Left ventricle myocardium superior (tissue), 1 donor: ENCODE measurements at regions of chrX and their contacts with region 1.

Region 1: DNA sequence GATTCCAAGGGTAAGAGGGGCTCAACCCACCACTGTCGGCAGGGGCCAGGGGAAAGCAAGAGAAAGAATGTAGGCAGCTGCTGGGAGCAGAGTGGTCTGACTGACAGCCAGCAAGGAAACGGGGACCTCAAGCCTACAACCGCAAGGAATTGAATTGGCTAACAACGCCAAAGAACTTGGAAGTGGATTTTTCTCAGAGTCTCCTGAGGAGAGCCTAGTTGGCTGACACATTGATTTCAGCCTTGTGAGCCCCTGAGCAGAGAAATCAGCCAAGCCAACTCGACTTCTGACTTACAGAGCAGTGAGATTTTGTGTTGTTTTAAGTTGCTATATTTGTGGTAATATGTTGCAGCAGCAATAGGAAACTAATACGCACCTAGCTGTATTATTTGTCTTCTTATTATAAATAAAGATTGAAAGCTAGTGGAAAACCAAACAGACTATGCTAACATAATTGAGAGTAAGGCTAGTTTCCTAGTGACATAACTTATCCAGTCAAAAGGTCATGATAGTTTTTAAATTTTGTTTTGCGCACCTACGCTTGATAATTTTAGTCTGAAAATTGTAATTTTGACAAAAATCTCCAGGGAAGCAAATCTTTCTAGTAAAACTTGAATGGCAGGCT is 145.8 kb upstream of the HCCS start:
- DNase-seq: no peak
- ATAC-seq: no peak

Region 2: DNA sequence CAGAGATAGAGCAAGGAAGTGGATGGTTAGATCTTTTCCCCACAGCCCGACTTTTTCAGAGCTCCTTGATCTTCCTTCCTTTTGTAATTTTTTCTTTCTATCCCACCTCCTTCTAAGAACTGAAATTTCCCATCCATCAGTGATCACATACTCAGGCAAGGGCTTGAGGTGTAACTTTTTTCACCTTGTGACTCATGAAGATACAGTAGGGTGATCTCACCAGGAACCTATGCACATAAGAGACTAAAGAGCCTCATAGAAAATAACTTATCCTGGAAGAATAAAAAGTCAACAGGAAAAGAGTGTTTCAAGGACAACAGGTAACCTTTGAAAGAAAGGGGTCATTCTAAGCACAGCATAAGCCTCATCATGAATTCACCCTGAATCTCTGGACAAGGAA is 14.7 kb after region 1 on chrX:
- intact Hi-C with region 1: loop called (anchors 2 kb)
- DNase-seq: no peak
- ATAC-seq: no peak

Region 3: DNA sequence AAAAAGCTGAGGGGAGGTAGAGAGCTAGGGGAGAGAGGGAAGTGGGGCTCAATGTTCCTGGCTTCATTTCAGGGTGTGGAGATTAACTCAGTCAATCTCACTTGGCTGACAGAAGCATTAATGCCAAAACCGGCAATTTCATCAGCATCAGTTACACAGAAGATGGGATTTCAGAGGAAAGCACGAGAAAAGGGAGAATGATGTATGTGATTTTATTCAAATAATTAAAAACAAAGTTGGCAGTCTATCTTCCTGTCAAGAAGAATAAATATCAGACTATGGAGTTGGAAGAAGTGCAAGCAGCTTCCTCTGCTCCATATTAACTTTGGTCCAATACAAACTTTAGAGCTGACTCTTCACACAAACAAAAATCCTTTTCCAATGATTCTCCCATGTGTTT is 116.2 kb after region 1 on chrX:
- intact Hi-C with region 1: no loop called
- DNase-seq: no peak
- ATAC-seq: no peak